ENCODE measurements at regions of chr17 and their contacts with region 1.

Region 1: GRCh38 chr17:63039899-63040641 is 74.0 kb downstream of the TANC2 start:
- DNase-seq: peak; percentile 89
- ATAC-seq: peak; percentile 87
- H3K4me3 ChIP-seq: peak overlapping the region; percentile 60
- H3K27ac ChIP-seq: peak overlapping the region; percentile 74
- H3K4me1 ChIP-seq: peaks cover 35% of the 10 kb centered on the region
- H3K27me3 ChIP-seq: no peaks in the 10 kb centered on the region
- CTCF ChIP-seq: 0 out of 2 replicates have a peak, but pooled peaks have one; percentile 23

Region 2: DNA sequence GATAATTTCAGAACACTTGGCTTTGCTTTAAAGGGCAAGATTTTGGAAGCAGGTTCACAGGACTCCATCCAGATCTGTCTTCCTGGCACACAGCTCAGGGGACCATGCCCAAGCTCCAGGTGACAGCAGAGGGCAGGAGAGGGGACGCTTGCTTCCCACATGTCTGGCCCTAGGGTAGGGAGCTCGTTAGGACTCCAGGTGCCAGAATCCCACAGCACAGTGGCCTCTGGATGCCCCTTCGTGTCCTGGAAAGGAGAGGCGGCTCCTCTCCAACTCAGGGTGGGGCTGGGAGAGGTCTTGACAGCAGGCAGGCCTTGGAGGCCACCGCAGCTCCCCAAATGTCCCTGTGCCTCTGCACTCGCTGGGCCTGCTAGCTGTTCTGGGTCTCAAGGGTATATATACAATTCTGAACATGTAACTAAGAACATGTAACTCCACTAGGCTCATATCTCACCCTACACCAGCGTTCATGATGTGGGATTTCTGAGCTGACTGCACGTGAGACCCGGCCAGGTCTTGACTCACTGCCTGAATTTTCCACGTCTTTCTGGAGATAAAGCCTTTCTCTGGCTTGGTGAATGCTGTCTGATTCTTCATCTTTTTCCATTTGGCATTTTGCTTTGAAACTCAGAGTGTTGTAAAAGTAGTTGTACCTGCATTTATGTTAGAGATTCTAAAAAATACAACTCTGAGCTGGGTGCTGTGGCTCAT is 284.8 kb before region 1 on chr17:
- CTCF ChIA-PET with region 1: no interaction called
- POLR2A ChIA-PET with region 1: interaction called, 14 read pairs
- intact Hi-C with region 1: no loop called
- DNase-seq: no peak
- ATAC-seq: no peak
- H3K4me3 ChIP-seq: no peak overlapping the region
- H3K27ac ChIP-seq: no peak overlapping the region
- H3K4me1 ChIP-seq: peaks cover 13% of the 10 kb centered on the region
- H3K27me3 ChIP-seq: no peaks in the 10 kb centered on the region
- CTCF ChIP-seq: 0 out of 2 replicates have a peak, but pooled peaks have one; percentile 8

Region 3: DNA sequence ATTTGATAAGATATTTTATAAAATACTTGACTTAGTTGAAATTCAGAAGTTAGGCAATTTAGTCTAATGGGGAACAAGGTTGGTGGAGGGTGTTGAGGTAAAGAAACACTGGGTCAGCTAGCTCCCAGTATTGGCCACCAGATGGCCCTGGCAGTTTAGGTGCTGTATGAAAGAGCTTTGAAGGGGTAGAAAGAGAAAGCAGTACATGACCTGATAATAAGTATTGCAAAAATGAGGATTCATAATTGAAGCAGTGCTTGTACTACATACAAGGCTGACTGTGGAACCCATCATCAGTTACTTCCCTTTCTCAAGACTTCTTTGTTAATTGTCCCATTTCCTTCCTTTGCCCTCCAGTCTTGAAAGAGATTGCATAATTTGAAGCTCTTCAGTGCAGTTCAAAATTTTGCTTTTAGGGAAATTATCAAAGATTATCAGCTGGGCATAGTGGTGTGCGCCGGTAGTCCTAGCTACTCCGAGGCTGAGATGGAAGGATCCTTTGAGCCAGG is 44.6 kb before region 1 on chr17:
- CTCF ChIA-PET with region 1: interaction called, 3 read pairs
- POLR2A ChIA-PET with region 1: no interaction called
- intact Hi-C with region 1: loop called (anchors 5 kb)
- DNase-seq: peak; percentile 65
- ATAC-seq: peak; percentile 88
- H3K4me3 ChIP-seq: no peak overlapping the region
- H3K27ac ChIP-seq: no peak overlapping the region
- H3K4me1 ChIP-seq: no peaks in the 10 kb centered on the region
- H3K27me3 ChIP-seq: no peaks in the 10 kb centered on the region
- CTCF ChIP-seq: peak; percentile 92

Measured in PC-3 (cell line).